WTC11 (cell line): ENCODE measurements at regions of chr16 and their contacts with region 1.

Region 1: DNA sequence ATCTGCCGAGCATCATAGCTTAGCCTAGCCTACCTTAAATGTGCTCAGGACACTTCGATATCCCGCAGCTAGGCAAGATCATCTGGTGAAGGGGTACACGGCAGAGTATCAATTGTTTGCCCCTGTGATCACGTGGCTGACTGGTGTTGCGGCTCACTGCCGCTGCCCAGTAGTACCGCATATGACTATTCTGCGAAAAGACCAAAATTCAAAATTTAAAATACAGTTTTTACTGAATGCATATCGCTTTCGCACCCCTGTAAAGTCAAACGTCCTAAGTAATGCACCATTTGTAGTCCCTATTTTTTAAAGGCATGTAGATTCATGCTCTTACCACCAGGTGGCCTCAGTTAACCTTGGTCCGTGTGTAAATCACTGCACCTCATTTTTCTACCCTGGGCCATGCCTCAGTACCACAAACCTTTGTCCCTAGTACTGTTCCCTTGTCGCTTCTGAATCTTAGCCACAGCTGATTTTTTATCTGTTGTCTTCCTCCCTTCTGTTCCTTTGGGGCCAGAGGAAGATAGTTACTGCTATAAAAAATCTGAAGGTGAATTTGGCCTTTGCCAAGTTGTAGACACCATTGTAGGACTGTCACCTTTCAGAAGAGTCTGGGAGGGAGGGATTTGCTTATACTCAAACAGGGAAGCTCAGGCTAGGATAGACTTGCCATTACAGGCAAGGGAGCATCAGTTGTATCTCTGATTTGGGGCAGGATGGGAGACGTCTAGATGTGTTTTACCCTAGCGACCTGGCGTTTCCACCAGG is 34.4 kb downstream of the WWP2 start:
- DNase-seq: no peak
- ATAC-seq: peak; percentile 91
- H3K4me3 Mint-ChIP-seq: peak overlapping the region; percentile 59
- H3K27ac Mint-ChIP-seq: no peak overlapping the region
- H3K4me1 Mint-ChIP-seq: peaks cover 3% of the 10 kb centered on the region; the same call in 1 of the 2 replicates
- H3K27me3 Mint-ChIP-seq: no peaks in the 10 kb centered on the region
- CTCF ChIP-seq: peak; percentile 85

Region 2: DNA sequence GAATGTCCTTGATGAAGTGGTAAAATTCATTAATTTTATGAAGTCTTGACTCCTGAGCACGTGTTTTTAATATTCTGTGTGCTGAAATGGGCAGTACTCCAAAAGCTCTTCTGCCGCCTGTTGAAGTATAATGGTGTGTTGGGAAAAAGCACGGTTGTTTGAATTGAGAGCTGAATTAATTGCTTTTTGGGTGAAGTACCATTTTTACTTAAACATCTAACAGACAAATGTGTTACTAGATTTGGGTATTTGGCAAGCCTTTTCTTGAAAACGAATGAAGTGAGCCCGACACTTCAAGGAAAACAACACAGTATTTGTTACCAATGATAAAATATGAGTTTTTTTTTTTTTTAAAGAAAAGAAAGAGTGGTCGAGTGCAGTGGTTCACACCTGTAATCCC is 11.9 kb before region 1 on chr16:
- CTCF ChIA-PET with region 1: interaction called, 16 read pairs
- POLR2A ChIA-PET with region 1: no interaction called
- DNase-seq: no peak
- ATAC-seq: no peak
- H3K4me3 Mint-ChIP-seq: no peak overlapping the region
- H3K27ac Mint-ChIP-seq: no peak overlapping the region
- H3K4me1 Mint-ChIP-seq: peaks cover 5% of the 10 kb centered on the region; the same call in 1 of the 2 replicates
- H3K27me3 Mint-ChIP-seq: no peaks in the 10 kb centered on the region
- CTCF ChIP-seq: no peak